ENCODE measurements at regions of chr2 and their contacts with region 1.

Region 1: DNA sequence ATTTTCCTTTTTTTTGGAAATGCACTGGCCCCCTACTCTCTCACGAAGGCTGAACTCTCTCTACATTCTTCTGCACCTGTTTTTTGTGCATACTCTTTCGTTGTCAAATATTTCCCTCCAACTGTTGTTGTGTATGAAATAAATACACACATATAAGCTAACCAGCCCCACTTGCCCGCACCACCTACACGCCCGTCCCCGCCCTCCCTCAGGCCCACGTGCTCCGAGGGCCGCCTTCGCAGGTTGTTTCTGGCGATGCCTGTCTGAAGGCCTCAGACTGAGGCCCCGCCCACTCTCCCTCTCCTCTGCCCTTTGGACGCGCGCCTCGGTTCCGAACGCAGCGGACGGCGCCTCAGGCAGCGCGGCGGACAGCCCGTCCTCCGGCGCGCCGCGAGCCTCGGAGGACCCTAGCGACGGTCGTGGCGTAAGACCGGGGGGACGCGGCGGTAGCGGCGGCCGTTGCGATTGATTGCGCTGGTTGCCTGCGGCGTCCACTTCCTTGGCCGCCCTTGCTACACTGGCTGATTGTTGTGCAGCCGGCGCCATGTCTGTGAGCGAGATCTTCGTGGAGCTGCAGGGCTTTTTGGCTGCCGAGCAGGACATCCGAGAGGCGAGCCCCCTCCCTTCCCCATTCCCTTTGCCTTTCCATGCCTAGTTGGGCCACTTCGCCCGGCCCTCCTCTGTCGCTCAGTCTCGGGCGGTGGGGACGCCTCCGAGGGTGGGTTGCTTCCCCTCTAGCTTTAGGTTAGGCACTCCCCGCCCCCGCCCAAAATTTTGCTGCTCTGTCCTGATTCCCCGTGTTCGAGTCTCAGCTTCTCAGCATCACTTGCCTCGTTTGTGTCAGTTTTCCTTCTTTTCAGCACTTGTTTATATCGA is at the start of gene TSN:
- H3K4me3 Mint-ChIP-seq: peak within 1 kb of the TSS; percentile 96
- H3K27ac Mint-ChIP-seq: peak within 1 kb of the TSS; percentile 95
- H3K4me1 Mint-ChIP-seq: peaks cover 33% of the 10 kb centered on the region
- H3K27me3 Mint-ChIP-seq: no peaks in the 10 kb centered on the region

Region 2: GRCh38 chr2:121479882-121480522 is 275.5 kb before region 1 on chr2:
- intact Hi-C with region 1: no loop called
- H3K4me3 Mint-ChIP-seq: no peak overlapping the region
- H3K27ac Mint-ChIP-seq: no peak overlapping the region
- H3K4me1 Mint-ChIP-seq: peaks cover 26% of the 10 kb centered on the region
- H3K27me3 Mint-ChIP-seq: no peaks in the 10 kb centered on the region

Region 3: GRCh38 chr2:121736462-121737341 is 18.8 kb before region 1 on chr2 and contains the start of gene NIFK:
- intact Hi-C with region 1: loop called (anchors 1 kb)
- H3K4me3 Mint-ChIP-seq: peak within 1 kb of the TSS; percentile 98
- H3K27ac Mint-ChIP-seq: peak within 1 kb of the TSS; percentile 94
- H3K4me1 Mint-ChIP-seq: peaks cover 37% of the 10 kb centered on the region
- H3K27me3 Mint-ChIP-seq: no peaks in the 10 kb centered on the region